ENCODE measurements at regions of chr17 and their contacts with region 1.

Region 1: GRCh38 chr17:27245230-27245696 is 48.7 kb upstream of the WSB1 start:
- DNase-seq: peak; percentile 48
- H3K4me3 ChIP-seq: peak overlapping the region in 2 of 4 donors; percentile 18 to 52
- H3K27ac ChIP-seq: peak overlapping the region; percentile 80 to 93 (median 92)
- H3K4me1 ChIP-seq: peaks cover 42 to 92% (median 68%) of the 10 kb centered on the region in 3 donors
- H3K27me3 ChIP-seq: no peaks in the 10 kb centered on the region
- CTCF ChIP-seq: peak; percentile 53 to 81 (median 64)
- POLR2A ChIP-seq: no peak

Region 2: DNA sequence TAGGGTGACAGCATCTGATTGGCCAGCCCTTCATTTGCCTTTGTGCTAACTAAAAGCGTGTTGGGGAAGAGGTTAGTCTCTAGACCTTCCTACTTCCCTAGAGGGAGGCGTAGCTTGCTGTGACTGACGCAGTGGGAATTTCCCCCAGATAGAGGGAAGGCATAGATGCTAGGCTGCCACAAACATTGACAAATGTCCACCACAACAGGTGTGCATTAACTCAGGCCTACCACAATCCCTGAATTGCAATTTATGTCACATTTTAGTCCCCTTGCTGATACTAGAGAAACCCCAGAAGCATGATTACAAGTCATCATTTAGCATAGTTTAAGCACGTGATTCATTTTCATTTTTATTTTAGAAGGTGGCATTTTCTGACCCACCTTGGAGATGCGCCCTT is 27.6 kb before region 1 on chr17:
- intact Hi-C with region 1: no loop called
- DNase-seq: no peak
- H3K4me3 ChIP-seq: no peak overlapping the region
- H3K27ac ChIP-seq: no peak overlapping the region
- H3K4me1 ChIP-seq: no peaks in the 10 kb centered on the region
- H3K27me3 ChIP-seq: peaks cover 0 to 3% (median 0%) of the 10 kb centered on the region in 4 donors
- CTCF ChIP-seq: no peak
- POLR2A ChIP-seq: no peak

Region 3: GRCh38 chr17:27282054-27282551 is 36.8 kb after region 1 on chr17:
- intact Hi-C with region 1: no loop called
- DNase-seq: no peak
- H3K4me3 ChIP-seq: no peak overlapping the region
- H3K27ac ChIP-seq: no peak overlapping the region
- H3K4me1 ChIP-seq: peaks cover 0 to 6% (median 0%) of the 10 kb centered on the region in 3 donors
- H3K27me3 ChIP-seq: no peaks in the 10 kb centered on the region
- CTCF ChIP-seq: no peak
- POLR2A ChIP-seq: no peak

Region 4: DNA sequence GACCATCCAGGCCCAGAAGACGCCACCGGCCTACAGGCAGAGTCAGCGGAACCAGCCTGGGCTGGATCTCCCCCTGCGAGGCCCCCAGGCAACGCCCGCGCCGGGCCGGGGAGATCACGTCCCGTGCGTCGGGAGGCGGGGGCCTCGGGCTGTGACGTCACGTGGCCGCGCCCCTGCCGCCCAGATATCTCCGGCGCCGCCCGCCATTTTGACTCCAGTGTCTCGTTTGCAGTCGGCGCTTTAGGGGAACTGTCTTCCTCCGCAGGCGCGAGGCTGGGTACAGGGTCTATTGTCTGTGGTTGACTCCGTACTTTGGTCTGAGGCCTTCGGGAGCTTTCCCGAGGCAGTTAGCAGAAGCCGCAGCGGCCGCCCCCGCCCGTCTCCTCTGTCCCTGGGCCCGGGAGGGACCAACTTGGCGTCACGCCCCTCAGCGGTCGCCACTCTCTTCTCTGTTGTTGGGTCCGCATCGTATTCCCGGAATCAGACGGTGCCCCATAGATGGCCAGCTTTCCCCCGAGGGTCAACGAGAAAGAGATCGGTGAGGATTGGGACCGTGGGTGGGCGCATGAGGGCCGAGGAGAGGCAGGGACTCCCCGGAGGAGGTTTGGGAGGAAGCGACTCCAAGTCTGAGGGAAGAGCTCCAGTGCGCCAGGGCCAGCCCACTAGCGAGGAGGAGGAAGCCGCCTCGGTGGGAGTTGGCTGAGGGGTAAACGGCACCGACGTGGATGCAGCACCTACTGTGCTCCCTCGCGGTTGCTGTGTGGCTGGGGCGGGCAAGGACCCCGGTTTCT is 48.8 kb after region 1 on chr17 and contains the start of gene WSB1:
- intact Hi-C with region 1: loop called (anchors 10 kb)
- DNase-seq: peak; percentile 78
- H3K4me3 ChIP-seq: peak within 1 kb of the TSS; percentile 71 to 94 (median 90)
- H3K27ac ChIP-seq: peak within 1 kb of the TSS; percentile 97 to 100 (median 98)
- H3K4me1 ChIP-seq: peaks cover 19 to 46% (median 37%) of the 10 kb centered on the region in 3 donors
- H3K27me3 ChIP-seq: no peaks in the 10 kb centered on the region
- CTCF ChIP-seq: peak in 2 of 6 experiments; percentile 12 to 24
- POLR2A ChIP-seq: peak in 3 of 4 donors; percentile 92 to 98 (median 98)
- total RNA-seq, gene WSB1: 27.9 to 112 (median 62.8) TPM

Region 5: GRCh38 chr17:27332485-27333409 is 87.5 kb after region 1 on chr17:
- intact Hi-C with region 1: loop called (anchors 5 kb)
- DNase-seq: peak; percentile 76
- H3K4me3 ChIP-seq: peak overlapping the region; percentile 34 to 76 (median 54)
- H3K27ac ChIP-seq: peak overlapping the region; percentile 88 to 97 (median 92)
- H3K4me1 ChIP-seq: peaks cover 13 to 40% (median 15%) of the 10 kb centered on the region in 3 donors
- H3K27me3 ChIP-seq: no peaks in the 10 kb centered on the region
- CTCF ChIP-seq: peak; percentile 76 to 96 (median 94)
- POLR2A ChIP-seq: no peak

Region 6: DNA sequence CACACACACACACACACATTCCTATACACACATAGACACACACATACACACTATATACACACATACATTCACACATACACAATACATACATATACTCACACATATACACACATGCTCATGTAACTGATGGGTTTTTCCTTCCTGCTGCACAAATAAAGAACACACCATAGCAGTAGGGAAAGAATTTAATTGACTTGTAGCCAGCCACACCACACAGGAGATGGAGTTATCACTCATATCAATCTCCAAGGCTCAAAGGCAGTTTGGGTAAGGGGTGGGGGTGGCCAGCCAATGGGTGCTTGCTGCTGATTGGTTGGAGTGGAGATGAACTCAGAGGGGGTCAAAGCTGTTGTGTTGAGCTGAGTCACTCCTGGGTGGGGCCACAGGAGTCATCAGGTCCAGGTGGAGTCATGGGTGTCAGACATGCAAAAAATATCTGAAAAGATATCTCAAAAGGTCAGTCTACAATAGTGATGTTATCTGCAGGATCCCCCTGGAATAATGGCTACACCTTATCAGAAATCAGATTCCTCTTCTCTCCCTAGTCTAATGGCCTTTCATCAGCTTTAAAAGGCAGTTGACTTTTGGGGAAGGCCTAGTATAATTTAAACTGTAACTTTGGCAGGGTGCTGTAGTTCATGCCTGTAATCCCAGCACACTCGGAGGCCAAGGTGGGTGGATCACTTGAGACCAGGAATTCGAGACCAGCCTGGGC is 94.7 kb after region 1 on chr17:
- intact Hi-C with region 1: loop called (anchors 5 kb)
- DNase-seq: no peak
- H3K4me3 ChIP-seq: no peak overlapping the region
- H3K27ac ChIP-seq: peak overlapping the region in 2 of 4 donors; percentile 49 to 55
- H3K4me1 ChIP-seq: peaks cover 8 to 34% (median 10%) of the 10 kb centered on the region in 3 donors
- H3K27me3 ChIP-seq: no peaks in the 10 kb centered on the region
- CTCF ChIP-seq: no peak
- POLR2A ChIP-seq: no peak

Region 7: DNA sequence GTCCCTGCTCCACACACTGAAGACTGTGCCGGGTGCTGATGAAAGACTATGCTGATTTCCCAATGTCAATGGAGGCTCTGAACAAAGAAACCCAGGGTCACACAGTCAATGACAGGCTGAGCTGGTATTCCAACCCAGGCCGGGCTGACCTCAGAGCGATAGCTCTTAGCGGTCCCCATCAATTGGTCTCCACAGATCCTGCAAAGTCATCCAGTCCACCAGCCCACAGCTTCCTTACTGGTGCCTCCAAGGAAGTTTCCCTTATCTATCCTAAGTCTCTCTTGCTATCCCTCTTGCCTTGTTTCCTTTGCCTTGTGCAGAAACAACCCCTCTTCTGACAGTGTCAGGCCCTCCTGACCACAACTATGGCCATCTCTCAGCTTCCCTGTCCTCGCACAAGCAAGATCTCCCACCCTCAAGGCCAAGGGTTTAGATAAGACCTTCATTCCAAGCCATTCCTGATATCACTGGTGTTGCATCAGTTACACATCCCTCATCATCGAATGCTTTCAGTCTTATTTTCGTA is 158.3 kb after region 1 on chr17:
- intact Hi-C with region 1: no loop called
- DNase-seq: no peak
- H3K4me3 ChIP-seq: no peak overlapping the region
- H3K27ac ChIP-seq: no peak overlapping the region
- H3K4me1 ChIP-seq: peaks cover 0 to 9% (median 9%) of the 10 kb centered on the region in 3 donors
- H3K27me3 ChIP-seq: no peaks in the 10 kb centered on the region
- CTCF ChIP-seq: no peak
- POLR2A ChIP-seq: no peak

Measured in esophagus squamous epithelium (tissue), 5 donors.